Dendritic cell treated with granulocyte-macrophage colony-stimulating factor and Interleukin-4, amounts not matched to agents 40 ng/mL and 50 ng/mL, for 4 days (primary cell): ENCODE measurements at regions of chr13 and their contacts with region 1.

Region 1: GRCh38 chr13:36818804-36819738 is at the start of gene RFXAP:
- H3K4me3 Mint-ChIP-seq: peak within 1 kb of the TSS; percentile 92
- H3K27ac Mint-ChIP-seq: peak within 1 kb of the TSS; percentile 87
- H3K4me1 Mint-ChIP-seq: peaks cover 44% of the 10 kb centered on the region
- H3K27me3 Mint-ChIP-seq: peaks cover 2% of the 10 kb centered on the region

Region 2: DNA sequence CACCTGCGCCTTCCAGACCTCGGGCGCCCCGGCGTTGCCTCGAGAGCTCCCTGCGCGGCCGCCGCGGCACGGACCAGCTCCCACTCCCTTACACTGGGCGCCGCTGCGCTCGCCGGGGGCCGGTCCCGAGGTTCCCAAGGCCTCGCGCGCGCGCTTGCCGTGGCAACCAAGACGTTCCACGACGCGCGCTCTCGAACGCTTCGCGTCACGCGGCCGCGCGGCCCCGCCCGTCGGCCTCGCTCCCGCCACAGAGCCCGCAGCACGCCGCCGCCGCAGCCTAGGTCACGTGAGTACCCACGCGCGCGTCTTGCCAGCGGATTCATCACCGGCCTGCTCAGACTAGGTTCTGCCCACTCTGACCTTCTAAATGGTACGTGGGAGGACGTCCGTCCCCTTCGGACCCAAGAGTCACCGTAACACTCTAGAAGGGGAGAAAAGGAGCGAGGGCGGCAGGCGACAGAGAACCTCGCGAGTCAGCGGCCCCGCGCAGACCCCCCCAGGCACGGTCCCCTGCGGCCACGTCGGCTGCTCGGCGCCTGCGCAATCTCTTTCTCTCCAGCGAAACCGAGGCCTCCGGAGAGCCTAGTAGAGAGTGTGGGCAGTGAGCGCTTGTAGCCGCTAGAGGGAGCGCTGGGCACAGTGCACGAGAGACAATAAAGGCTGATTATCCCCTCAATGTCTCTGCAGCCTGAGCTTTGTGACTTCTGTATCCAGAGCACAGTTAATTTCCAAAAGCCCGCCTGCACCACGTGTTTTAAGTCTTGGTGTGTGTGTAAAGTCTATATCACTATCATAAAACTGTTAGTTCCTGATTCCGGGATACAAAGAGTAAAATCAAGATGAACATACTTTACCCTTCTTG is 472.6 kb before region 1 on chr13 and contains the start of gene SPART:
- intact Hi-C with region 1: loop called (anchors 2 kb)
- H3K4me3 Mint-ChIP-seq: peak within 1 kb of the TSS; percentile 77
- H3K27ac Mint-ChIP-seq: peak within 1 kb of the TSS; percentile 89
- H3K4me1 Mint-ChIP-seq: peaks cover 33% of the 10 kb centered on the region
- H3K27me3 Mint-ChIP-seq: no peaks in the 10 kb centered on the region

Region 3: DNA sequence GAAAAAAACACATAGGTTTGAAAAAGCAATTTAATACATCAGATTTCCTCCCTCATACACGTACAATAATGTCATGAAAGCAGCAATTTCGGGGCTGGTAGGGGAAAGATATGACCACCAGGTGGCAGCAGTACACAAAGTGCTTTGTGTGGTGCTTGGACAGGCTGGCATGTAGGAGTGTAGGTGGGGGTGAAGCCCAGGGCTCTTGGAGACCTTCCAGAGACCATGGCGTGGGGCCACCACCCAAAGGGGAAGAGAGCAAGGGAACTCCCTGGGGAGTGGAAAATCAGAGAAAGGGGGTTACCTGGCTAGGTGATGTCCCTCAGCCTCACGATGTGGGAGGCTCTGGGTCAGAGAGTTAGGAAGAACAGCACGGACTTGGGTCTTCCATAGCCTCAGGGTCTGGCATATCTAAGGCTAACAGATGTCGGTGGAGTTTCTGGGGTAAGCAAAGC is 398.6 kb before region 1 on chr13:
- intact Hi-C with region 1: loop called (anchors 5 kb)
- H3K4me3 Mint-ChIP-seq: no peak overlapping the region
- H3K27ac Mint-ChIP-seq: peak overlapping the region; percentile 66
- H3K4me1 Mint-ChIP-seq: peaks cover 40% of the 10 kb centered on the region
- H3K27me3 Mint-ChIP-seq: no peaks in the 10 kb centered on the region

Region 4: DNA sequence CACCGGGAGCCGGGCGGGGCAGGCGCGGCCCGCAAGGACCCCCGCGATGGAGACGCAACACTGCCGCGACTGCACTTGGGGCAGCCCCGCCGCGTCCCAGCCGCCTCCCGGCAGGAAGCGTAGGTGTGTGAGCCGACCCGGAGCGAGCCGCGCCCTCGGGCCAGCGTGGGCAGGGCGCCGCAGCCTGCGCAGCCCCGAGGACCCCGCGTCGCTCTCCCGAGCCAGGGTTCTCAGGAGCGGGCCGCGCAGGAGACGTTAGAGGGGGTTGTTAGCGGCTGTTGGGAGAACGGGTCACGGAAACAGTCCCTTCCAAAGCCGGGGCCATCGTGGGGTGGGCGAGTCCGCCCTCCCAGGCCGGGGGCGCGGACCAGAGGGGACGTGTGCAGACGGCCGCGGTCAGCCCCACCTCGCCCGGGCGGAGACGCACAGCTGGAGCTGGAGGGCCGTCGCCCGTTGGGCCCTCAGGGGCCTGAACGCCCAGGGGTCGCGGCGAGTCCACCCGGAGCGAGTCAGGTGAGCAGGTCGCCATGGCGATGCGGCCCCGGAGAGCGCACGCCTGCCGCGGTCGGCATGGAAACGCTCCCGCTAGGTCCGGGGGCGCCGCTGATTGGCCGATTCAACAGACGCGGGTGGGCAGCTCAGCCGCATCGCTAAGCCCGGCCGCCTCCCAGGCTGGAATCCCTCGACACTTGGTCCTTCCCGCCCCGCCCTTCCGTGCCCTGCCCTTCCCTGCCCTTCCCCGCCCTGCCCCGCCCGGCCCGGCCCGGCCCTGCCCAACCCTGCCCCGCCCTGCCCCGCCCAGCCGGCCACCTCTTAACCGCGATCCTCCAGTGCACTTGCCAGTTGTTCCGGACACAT is 387.2 kb before region 1 on chr13 and contains the start of gene CCNA1:
- intact Hi-C with region 1: loop called (anchors 5 kb)
- H3K4me3 Mint-ChIP-seq: peak within 1 kb of the TSS; percentile 73
- H3K27ac Mint-ChIP-seq: no peak within 1 kb of the TSS
- H3K4me1 Mint-ChIP-seq: peaks cover 27% of the 10 kb centered on the region
- H3K27me3 Mint-ChIP-seq: peaks cover 52% of the 10 kb centered on the region

Region 5: GRCh38 chr13:36981156-36981743 is 162.2 kb after region 1 on chr13:
- intact Hi-C with region 1: loop called (anchors 10 kb)
- H3K4me3 Mint-ChIP-seq: no peak overlapping the region
- H3K27ac Mint-ChIP-seq: no peak overlapping the region
- H3K4me1 Mint-ChIP-seq: peaks cover 5% of the 10 kb centered on the region
- H3K27me3 Mint-ChIP-seq: no peaks in the 10 kb centered on the region

Region 6: DNA sequence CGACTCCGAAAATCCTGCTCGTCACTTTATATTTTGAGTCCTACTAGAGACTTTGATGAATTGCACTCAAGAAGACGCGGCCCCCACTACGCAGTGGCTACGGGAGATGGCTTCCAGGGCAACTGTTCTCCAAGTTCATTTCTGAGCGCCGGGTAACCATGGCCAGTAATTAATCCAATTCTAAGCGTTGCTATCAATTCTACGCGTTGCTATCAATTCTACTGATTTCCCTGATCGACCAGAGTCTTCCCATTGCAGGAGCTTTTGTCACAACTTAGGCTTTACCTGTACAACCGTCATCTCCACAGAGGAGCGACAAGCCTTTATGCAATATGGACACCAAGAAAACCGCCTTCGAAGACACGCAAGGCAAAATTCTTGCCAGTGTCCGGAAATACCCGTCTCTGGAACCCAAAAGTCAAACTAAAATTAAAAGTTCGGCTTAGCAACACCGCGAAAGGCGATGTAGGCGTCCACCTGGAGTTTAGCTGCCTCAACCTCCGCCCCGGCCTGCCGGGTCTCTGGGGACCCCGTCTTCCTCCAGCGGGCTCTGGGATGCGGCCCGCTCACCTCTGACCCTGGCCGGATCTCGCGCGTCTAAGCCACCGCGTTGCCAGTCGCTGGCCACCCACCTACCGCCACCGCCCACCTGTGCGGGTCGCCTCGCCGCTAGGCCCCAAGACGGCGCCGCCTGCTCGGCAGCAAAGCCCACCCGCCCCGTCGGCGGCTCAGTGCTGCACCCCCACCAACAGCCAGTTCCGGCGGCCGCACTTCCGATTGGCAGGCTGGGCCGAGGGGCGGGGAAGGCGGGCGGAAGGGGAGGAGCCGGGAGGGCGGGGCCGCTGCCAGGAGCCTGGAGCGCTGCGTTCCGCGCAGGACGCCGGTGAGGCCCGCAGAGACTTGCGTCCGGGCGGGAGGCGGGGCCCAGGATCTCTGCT is 240.1 kb after region 1 on chr13 and contains the start of gene SUPT20H:
- intact Hi-C with region 1: loop called (anchors 10 kb)
- H3K4me3 Mint-ChIP-seq: peak within 1 kb of the TSS; percentile 93
- H3K27ac Mint-ChIP-seq: peak within 1 kb of the TSS; percentile 94
- H3K4me1 Mint-ChIP-seq: peaks cover 32% of the 10 kb centered on the region
- H3K27me3 Mint-ChIP-seq: peaks cover 2% of the 10 kb centered on the region

Region 7: GRCh38 chr13:38349390-38350113 is 1530.5 kb after region 1 on chr13 and contains the start of gene UFM1:
- intact Hi-C with region 1: loop called (anchors 10 kb)
- H3K4me3 Mint-ChIP-seq: peak within 1 kb of the TSS; percentile 92
- H3K27ac Mint-ChIP-seq: peak within 1 kb of the TSS; percentile 92
- H3K4me1 Mint-ChIP-seq: peaks cover 25% of the 10 kb centered on the region
- H3K27me3 Mint-ChIP-seq: no peaks in the 10 kb centered on the region